Breast epithelium (tissue), 4 donors: ENCODE measurements at regions of chr1 and their contacts with region 1.

Region 1: GRCh38 chr1:43952731-43953346 is 6.1 kb downstream of the IPO13 start:
- DNase-seq: no peak
- H3K4me3 ChIP-seq: no peak overlapping the region
- H3K27ac ChIP-seq: no peak overlapping the region
- H3K4me1 ChIP-seq: peaks cover 5 to 6% of the 10 kb centered on the region in 2 donors
- H3K27me3 ChIP-seq: no peaks in the 10 kb centered on the region
- CTCF ChIP-seq: no peak
- POLR2A ChIP-seq: no peak

Region 2: DNA sequence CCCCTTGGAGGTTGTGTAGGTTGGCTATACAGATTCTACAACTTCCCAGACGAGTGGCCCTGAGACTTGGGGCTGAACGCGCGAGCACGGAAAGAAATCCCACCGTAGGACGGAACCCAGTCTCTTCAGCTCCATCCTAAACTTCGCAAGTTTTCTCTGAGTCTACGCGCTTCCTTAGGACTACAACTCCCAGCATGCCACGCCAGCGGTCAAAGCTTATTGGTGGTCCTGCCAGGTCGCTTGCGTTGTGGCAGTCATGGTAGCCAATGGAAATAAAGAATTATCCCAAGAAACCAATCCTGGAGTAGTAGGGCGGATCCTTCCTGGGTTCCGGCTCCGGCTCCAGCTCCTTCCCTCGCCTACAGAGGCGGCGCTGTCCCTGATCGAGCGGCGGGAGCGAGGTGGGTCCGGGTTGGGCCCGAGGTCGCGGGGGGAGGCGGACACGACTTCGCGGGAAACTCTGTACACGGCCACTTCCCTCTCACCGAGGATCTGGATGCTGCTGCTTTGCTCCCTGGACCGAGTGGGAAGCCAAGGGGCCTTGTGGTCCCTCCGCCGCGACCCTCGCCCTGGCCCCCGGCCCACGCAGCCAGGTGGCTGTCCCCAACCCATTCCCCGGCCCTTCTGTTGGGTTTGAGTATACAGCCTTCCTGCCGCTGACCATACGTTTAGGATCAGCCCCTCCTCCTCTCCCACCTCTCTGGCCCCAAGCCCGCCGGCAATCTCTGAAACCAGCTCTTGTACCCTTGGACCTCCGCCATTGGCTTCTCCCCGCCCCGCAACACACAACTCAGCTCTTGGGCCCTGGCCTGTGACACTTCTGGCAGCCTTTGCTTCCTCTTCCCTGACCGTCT is 1106.4 kb before region 1 on chr1 and contains the start of gene ZNF691:
- intact Hi-C with region 1: loop called (anchors 10 kb)
- DNase-seq: peak; percentile 93 to 97
- H3K4me3 ChIP-seq: peak within 1 kb of the TSS; percentile 74 to 93 (median 84)
- H3K27ac ChIP-seq: peak within 1 kb of the TSS; percentile 79 to 85
- H3K4me1 ChIP-seq: peaks cover 0 to 6% of the 10 kb centered on the region in 2 donors
- H3K27me3 ChIP-seq: no peaks in the 10 kb centered on the region
- CTCF ChIP-seq: peak in 2 of 3 donors; percentile 11 to 38
- POLR2A ChIP-seq: peak; percentile 57
- total RNA-seq, gene ZNF691: 5.8 to 18.4 (median 10.5) TPM

Region 3: GRCh38 chr1:43688594-43689000 is 264.2 kb before region 1 on chr1:
- intact Hi-C with region 1: no loop called
- DNase-seq: no peak
- H3K4me3 ChIP-seq: no peak overlapping the region
- H3K27ac ChIP-seq: peak overlapping the region in 1 of 2 donors; percentile 19
- H3K4me1 ChIP-seq: no peaks in the 10 kb centered on the region
- H3K27me3 ChIP-seq: no peaks in the 10 kb centered on the region
- CTCF ChIP-seq: no peak
- POLR2A ChIP-seq: no peak

Region 4: GRCh38 chr1:43979528-43980254 is 26.9 kb after region 1 on chr1:
- intact Hi-C with region 1: no loop called
- DNase-seq: no peak
- H3K4me3 ChIP-seq: peak overlapping the region; percentile 76 to 85 (median 81)
- H3K27ac ChIP-seq: peak overlapping the region; percentile 61 to 72
- H3K4me1 ChIP-seq: peaks cover 0 to 18% of the 10 kb centered on the region in 2 donors
- H3K27me3 ChIP-seq: no peaks in the 10 kb centered on the region
- CTCF ChIP-seq: no peak
- POLR2A ChIP-seq: no peak

Region 5: DNA sequence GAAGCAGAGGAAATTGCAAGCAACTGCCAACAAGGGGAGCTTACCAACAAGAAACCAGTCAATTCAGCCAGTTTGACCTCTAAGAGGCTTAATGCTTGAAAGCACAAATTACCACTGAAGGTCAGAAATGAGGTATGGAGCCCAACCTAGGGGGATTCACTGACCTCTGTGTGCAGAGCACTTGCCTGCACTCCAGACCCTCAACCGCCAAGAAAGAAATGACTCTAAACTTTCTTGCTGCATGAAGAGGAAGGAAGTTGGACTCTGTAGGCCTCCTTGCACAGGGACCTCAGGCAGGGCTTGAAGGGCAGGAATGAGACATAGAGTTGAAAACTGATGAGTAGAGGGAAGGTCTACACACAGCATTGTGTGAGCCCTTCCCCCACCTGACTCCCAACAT is 731.7 kb after region 1 on chr1:
- intact Hi-C with region 1: no loop called
- DNase-seq: no peak
- H3K4me3 ChIP-seq: no peak overlapping the region
- H3K27ac ChIP-seq: no peak overlapping the region
- H3K4me1 ChIP-seq: no peaks in the 10 kb centered on the region
- H3K27me3 ChIP-seq: no peaks in the 10 kb centered on the region
- CTCF ChIP-seq: no peak
- POLR2A ChIP-seq: no peak

Region 6: GRCh38 chr1:45103534-45103933 is 1150.7 kb after region 1 on chr1:
- intact Hi-C with region 1: no loop called
- DNase-seq: no peak
- H3K4me3 ChIP-seq: no peak overlapping the region
- H3K27ac ChIP-seq: no peak overlapping the region
- H3K4me1 ChIP-seq: no peaks in the 10 kb centered on the region
- H3K27me3 ChIP-seq: no peaks in the 10 kb centered on the region
- CTCF ChIP-seq: no peak
- POLR2A ChIP-seq: no peak